Heart left ventricle (tissue), 16 donors: ENCODE measurements at regions of chr3 and their contacts with region 1.

Region 1: GRCh38 chr3:192825657-192826200 is 91.9 kb downstream of the MB21D2 start:
- DNase-seq: no peak
- ATAC-seq: peak in 1 of 4 donors; percentile 66
- H3K4me3 ChIP-seq: no peak overlapping the region
- H3K27ac ChIP-seq: no peak overlapping the region
- H3K4me1 ChIP-seq: peaks cover 0 to 34% (median 22%) of the 10 kb centered on the region in 12 donors
- H3K27me3 ChIP-seq: no peaks in the 10 kb centered on the region
- CTCF ChIP-seq: peak in 2 of 12 donors; percentile 8 to 14
- POLR2A ChIP-seq: no peak

Region 2: GRCh38 chr3:192481638-192482037 is 344.1 kb before region 1 on chr3:
- intact Hi-C with region 1: no loop called
- DNase-seq: no peak
- ATAC-seq: no peak
- H3K4me3 ChIP-seq: no peak overlapping the region
- H3K27ac ChIP-seq: no peak overlapping the region
- H3K4me1 ChIP-seq: peaks cover 0 to 24% (median 6%) of the 10 kb centered on the region in 12 donors
- H3K27me3 ChIP-seq: no peaks in the 10 kb centered on the region
- CTCF ChIP-seq: no peak
- POLR2A ChIP-seq: no peak

Region 3: GRCh38 chr3:192864941-192865340 is 39.2 kb after region 1 on chr3:
- intact Hi-C with region 1: loop called in 1 of 10 experiments (anchors 1 kb)
- DNase-seq: peak in 1 of 5 donors; percentile 18
- ATAC-seq: peak; percentile 48 to 71 (median 67)
- H3K4me3 ChIP-seq: no peak overlapping the region
- H3K27ac ChIP-seq: peak overlapping the region in 2 of 12 donors; percentile 34 to 42
- H3K4me1 ChIP-seq: peaks cover 3 to 43% (median 27%) of the 10 kb centered on the region in 12 donors
- H3K27me3 ChIP-seq: no peaks in the 10 kb centered on the region
- CTCF ChIP-seq: no peak
- POLR2A ChIP-seq: no peak

Region 4: GRCh38 chr3:192943393-192943792 is 117.7 kb after region 1 on chr3:
- intact Hi-C with region 1: no loop called
- DNase-seq: peak in 3 of 5 donors; percentile 26 to 32 (median 30)
- ATAC-seq: peak; percentile 83 to 91 (median 87)
- H3K4me3 ChIP-seq: peak overlapping the region in 2 of 12 donors; percentile 15 to 22
- H3K27ac ChIP-seq: peak overlapping the region in 9 of 12 donors; percentile 13 to 61 (median 50)
- H3K4me1 ChIP-seq: peaks cover 0 to 7% (median 0%) of the 10 kb centered on the region in 12 donors
- H3K27me3 ChIP-seq: no peaks in the 10 kb centered on the region
- CTCF ChIP-seq: no peak
- POLR2A ChIP-seq: no peak

Region 5: DNA sequence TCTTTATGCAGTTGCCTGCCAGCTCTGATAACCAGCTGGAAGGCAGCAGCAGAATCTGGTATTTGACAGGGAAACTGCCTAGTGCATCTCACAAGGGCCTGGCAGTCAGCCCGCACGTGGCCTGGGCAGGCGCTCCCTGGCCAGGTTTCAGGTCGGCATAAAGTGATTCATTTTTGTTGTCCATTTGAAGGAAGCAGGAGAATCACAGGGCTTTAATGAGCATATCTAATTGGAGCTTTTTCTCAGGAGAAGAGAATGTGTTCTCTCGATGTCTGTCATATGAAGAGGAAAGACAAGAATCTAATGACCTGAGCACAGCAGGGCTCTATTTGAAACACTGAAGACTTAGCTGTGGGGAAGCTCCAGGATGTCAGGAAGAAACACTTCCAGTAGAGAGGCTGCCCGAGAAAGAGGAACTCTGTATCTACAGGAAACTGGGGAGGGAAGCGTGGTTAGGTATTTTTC is 190.7 kb after region 1 on chr3:
- intact Hi-C with region 1: loop called in 1 of 10 experiments (anchors 5 kb)
- DNase-seq: peak; percentile 52 to 75 (median 55)
- ATAC-seq: peak; percentile 64 to 83 (median 76)
- H3K4me3 ChIP-seq: no peak overlapping the region
- H3K27ac ChIP-seq: no peak overlapping the region
- H3K4me1 ChIP-seq: peaks cover 0 to 15% (median 5%) of the 10 kb centered on the region in 12 donors
- H3K27me3 ChIP-seq: no peaks in the 10 kb centered on the region
- CTCF ChIP-seq: no peak
- POLR2A ChIP-seq: no peak

Region 6: GRCh38 chr3:193465992-193466608 is 640.4 kb after region 1 on chr3:
- intact Hi-C with region 1: loop called in 1 of 10 experiments (anchors 10 kb)
- DNase-seq: no peak
- ATAC-seq: no peak
- H3K4me3 ChIP-seq: no peak overlapping the region
- H3K27ac ChIP-seq: no peak overlapping the region
- H3K4me1 ChIP-seq: peaks cover 0 to 6% (median 0%) of the 10 kb centered on the region in 12 donors
- H3K27me3 ChIP-seq: no peaks in the 10 kb centered on the region
- CTCF ChIP-seq: no peak
- POLR2A ChIP-seq: no peak

Region 7: GRCh38 chr3:193592944-193593667 is 767.4 kb after region 1 on chr3 and contains the start of gene OPA1:
- intact Hi-C with region 1: loop called in 1 of 10 experiments (anchors 5 kb)
- DNase-seq: peak; percentile 97 to 99 (median 99)
- ATAC-seq: peak; percentile 98 to 99 (median 98)
- H3K4me3 ChIP-seq: peak within 1 kb of the TSS; percentile 71 to 100 (median 92)
- H3K27ac ChIP-seq: peak within 1 kb of the TSS; percentile 85 to 98 (median 93)
- H3K4me1 ChIP-seq: peaks cover 3 to 39% (median 24%) of the 10 kb centered on the region in 12 donors
- H3K27me3 ChIP-seq: no peaks in the 10 kb centered on the region
- CTCF ChIP-seq: peak in 10 of 12 donors; percentile 10 to 58 (median 38)
- POLR2A ChIP-seq: peak in 1 of 2 donors; percentile 69
- total RNA-seq, gene OPA1: 76.7 to 215 (median 107) TPM